Pancreas (tissue), 10 donors: ENCODE measurements at regions of chr1 and their contacts with region 1.

Region 1: DNA sequence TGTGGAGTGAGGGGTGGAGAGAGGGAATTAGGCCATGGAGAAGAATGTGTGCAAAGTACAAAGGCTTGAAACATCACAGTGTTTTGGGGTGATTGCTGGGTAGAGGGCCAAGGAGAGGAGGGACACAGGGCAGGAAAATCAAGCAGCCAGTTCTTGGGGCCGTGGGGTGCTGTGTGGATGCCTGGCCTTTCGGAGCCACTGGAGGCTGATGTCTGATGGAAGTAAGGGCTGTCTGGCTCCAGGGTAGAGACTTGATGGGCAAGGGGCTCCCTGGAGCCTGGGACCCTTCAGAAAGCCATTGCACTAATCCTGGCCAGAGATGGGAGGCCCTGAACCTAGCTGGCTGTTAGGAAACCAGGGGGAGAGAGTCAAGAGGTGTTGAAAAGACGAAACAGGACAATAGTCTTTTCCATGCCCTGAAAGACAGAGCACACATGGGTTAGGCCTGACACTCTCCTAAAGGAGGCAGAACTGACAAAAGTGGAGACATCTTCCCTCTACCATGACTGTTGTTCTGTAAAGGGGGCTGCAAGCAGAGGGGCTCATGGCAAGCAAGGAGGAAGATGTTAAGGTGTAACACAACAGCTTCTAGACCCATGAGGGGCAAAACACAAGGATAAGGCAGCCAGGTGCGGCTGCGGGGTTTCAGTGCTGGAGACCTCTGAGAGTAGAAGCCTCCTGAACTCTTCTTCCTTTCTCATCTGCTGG is 21.0 kb downstream of the ATF3 start:
- DNase-seq: no peak
- ATAC-seq: no peak
- H3K4me3 ChIP-seq: no peak overlapping the region
- H3K27ac ChIP-seq: no peak overlapping the region
- H3K4me1 ChIP-seq: no peaks in the 10 kb centered on the region
- H3K27me3 ChIP-seq: no peaks in the 10 kb centered on the region
- CTCF ChIP-seq: no peak

Region 2: DNA sequence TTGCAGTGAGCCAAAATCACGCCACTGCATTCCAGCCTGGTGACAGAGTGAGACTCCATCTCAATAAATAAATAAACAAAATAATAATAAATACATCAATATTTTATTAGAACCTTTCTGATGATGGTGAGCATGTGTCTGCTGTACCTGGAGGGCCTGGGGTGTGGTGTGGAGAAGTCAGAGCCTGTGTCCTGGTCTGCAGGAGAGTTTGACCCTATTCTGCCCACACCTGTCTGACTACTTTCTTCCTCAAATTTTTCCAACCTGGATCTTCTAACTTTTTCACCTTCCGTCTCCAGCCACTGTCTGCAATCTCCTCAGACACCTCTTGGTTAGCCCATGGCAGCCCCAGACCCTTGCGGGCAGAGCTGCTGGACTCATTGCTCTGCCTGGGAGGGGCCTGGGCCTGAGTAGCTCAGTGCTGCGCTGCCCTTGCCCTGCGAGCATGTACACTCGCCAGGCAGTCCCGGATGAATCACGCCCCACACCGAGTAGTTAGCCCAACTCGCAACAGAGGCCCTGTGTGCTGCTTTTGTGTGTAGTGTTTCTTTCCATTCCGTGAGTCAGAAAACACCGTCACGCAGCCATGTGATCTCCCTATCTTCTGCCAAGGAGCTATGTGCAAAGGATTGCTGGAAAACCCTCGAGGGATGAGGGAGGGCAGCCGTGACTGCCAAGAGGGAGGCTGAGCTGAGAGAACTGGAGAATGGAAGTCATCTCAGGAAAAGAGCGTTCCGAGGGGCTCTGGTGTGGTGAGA is 159.7 kb before region 1 on chr1:
- intact Hi-C with region 1: loop called in 2 of 3 experiments (anchors 5 to 10 kb)
- DNase-seq: peak in 3 of 6 donors; percentile 15 to 38 (median 30)
- ATAC-seq: peak in 3 of 4 donors; percentile 68 to 77 (median 74)
- H3K4me3 ChIP-seq: no peak overlapping the region
- H3K27ac ChIP-seq: no peak overlapping the region
- H3K4me1 ChIP-seq: no peaks in the 10 kb centered on the region
- H3K27me3 ChIP-seq: no peaks in the 10 kb centered on the region
- CTCF ChIP-seq: no peak

Region 3: GRCh38 chr1:212749821-212750535 is 120.4 kb after region 1 on chr1:
- intact Hi-C with region 1: no loop called
- DNase-seq: no peak
- ATAC-seq: peak in 3 of 4 donors; percentile 82 to 87 (median 85)
- H3K4me3 ChIP-seq: no peak overlapping the region
- H3K27ac ChIP-seq: peak overlapping the region in 2 of 4 donors; percentile 50 to 59
- H3K4me1 ChIP-seq: peaks cover 0 to 7% (median 0%) of the 10 kb centered on the region in 3 donors
- H3K27me3 ChIP-seq: no peaks in the 10 kb centered on the region
- CTCF ChIP-seq: peak; percentile 26 to 65 (median 44)